Activated T-helper 1 cell treated with anti-CD3 and anti-CD28 coated beads, Interleukin-12 subunit alpha, Interleukin-12 subunit beta, Interleukin-2, Interleukin-4 antibody, amounts not matched to agents 30 ng/mL and 10 ng/mL and 1 ng/mL, durations not matched to agents 14 hours and 24 hours and 36 hours (primary cell): ENCODE measurements at regions of chr7 and their contacts with region 1.

Region 1: GRCh38 chr7:90629297-90629918 is 33.3 kb downstream of the CDK14 start:
- DNase-seq: no peak
- H3K4me3 Mint-ChIP-seq: no peak overlapping the region
- H3K27ac Mint-ChIP-seq: no peak overlapping the region
- H3K4me1 Mint-ChIP-seq: no peaks in the 10 kb centered on the region
- H3K27me3 Mint-ChIP-seq: no peaks in the 10 kb centered on the region

Region 2: DNA sequence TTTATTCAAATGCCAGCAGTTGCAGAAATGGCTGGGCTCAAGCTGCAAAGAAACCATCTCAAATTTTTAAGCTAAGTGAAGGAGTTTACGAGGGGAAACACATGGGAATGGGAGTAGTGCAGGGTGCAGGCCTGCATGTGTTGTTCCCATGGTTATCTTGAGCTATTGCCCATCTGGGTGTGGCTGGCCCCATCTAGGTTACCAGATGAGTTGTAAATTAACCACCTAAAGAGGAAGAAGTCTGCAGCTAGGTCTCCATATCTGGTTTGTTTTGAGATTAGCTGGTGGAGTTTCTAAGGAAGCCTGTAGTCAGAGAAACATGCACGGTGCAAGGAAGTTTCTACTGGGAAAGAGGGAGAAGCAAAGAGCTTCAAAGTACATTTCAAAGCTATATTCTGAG is 441.1 kb before region 1 on chr7:
- intact Hi-C with region 1: no loop called
- DNase-seq: no peak
- H3K4me3 Mint-ChIP-seq: no peak overlapping the region
- H3K27ac Mint-ChIP-seq: no peak overlapping the region
- H3K4me1 Mint-ChIP-seq: no peaks in the 10 kb centered on the region
- H3K27me3 Mint-ChIP-seq: no peaks in the 10 kb centered on the region

Region 3: DNA sequence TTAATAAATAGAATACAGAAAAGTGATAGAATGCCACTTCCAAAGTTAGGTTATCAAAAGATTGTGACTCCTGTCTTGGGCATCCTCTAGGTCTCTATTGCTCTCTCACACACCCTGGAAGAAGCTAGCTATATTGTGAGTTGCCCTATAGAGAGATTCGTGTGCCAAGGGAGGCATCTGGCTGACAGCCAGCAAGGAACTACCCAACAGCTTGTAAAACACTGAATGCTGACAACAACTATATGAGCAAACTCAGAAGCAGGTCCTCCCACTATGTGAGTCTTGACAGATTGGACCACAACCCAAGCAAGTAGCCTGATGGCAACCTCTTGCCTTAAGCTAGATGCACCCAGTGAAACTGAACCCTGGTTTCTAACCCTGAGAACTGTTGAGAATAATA is 89.0 kb before region 1 on chr7:
- intact Hi-C with region 1: no loop called
- DNase-seq: no peak
- H3K4me3 Mint-ChIP-seq: no peak overlapping the region
- H3K27ac Mint-ChIP-seq: no peak overlapping the region
- H3K4me1 Mint-ChIP-seq: no peaks in the 10 kb centered on the region
- H3K27me3 Mint-ChIP-seq: peaks cover 2% of the 10 kb centered on the region

Region 4: DNA sequence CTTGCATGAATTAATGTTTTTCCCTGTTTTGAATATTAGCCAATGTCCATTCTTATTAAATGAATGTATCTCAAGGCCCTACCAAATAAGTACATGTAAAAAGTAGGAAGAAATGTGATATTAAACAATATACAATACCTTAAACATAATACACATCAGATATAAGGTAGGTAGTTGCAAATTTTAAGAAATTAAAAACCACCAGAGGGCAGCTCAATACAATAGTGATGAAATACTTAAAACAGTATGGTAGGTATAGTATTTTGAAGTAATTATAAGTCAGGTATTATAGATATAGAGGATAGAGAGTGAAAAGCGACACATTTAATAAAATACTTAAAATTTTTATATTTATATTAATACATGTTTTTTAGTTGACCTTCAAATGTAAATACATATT is 76.9 kb before region 1 on chr7:
- intact Hi-C with region 1: loop called (anchors 1 kb)
- DNase-seq: no peak
- H3K4me3 Mint-ChIP-seq: no peak overlapping the region
- H3K27ac Mint-ChIP-seq: no peak overlapping the region
- H3K4me1 Mint-ChIP-seq: no peaks in the 10 kb centered on the region
- H3K27me3 Mint-ChIP-seq: peaks cover 2% of the 10 kb centered on the region

Region 5: DNA sequence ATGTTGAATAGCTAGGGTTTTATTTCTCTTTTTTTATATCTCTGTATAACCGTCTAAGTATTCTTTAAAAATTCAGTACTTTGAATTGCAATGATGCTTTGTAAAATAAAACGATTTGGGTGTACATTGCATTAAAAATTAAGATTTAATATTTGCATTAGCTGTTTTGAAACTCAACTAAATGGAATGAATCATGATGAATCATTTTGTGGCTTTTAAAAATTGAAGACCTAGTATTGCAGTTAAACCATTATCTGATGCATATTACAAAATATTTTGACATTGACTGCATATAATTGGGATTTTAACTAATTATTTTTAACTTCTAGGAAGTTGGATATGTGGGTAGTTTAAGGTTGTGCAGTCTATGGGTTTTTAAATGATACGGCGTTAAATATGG is 280.7 kb after region 1 on chr7:
- intact Hi-C with region 1: no loop called
- DNase-seq: no peak
- H3K4me3 Mint-ChIP-seq: no peak overlapping the region
- H3K27ac Mint-ChIP-seq: no peak overlapping the region
- H3K4me1 Mint-ChIP-seq: no peaks in the 10 kb centered on the region
- H3K27me3 Mint-ChIP-seq: no peaks in the 10 kb centered on the region